ENCODE measurements at regions of chr7 and their contacts with region 1.

Region 1: GRCh38 chr7:74417419-74417971 is 36.2 kb upstream of the GTF2IRD1 start:
- DNase-seq: peak; percentile 69
- H3K4me3 Mint-ChIP-seq: no peak overlapping the region
- H3K27ac Mint-ChIP-seq: no peak overlapping the region
- H3K4me1 Mint-ChIP-seq: peaks cover 9% of the 10 kb centered on the region
- H3K27me3 Mint-ChIP-seq: no peaks in the 10 kb centered on the region
- CTCF ChIP-seq: peak; percentile 72

Region 2: GRCh38 chr7:74306730-74307469 is 110.6 kb before region 1 on chr7:
- CTCF ChIA-PET with region 1: no interaction called
- intact Hi-C with region 1: no loop called
- DNase-seq: no peak
- H3K4me3 Mint-ChIP-seq: no peak overlapping the region
- H3K27ac Mint-ChIP-seq: no peak overlapping the region
- H3K4me1 Mint-ChIP-seq: no peaks in the 10 kb centered on the region
- H3K27me3 Mint-ChIP-seq: no peaks in the 10 kb centered on the region
- CTCF ChIP-seq: no peak

Region 3: DNA sequence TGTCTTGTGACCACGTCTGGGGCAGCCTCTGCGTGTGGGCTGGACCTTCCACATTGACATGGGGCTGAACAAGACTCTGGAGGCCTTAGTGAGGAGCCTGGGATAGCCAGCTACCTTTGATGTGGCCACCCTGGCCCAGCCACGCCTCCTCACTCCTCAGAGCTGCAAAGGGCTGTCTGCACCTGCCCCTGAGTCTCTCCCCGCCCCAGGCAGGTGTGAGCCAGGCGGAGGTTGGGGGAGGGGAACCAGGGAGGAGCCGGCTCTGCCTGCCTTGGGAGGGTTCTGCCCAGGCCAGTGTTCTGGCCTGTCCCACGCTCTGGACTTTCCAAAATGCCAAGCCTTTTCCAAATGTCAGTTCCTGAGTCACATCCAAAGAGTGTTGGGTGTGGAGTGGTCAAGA is 108.4 kb after region 1 on chr7:
- CTCF ChIA-PET with region 1: no interaction called
- intact Hi-C with region 1: loop called (anchors 10 kb)
- DNase-seq: no peak
- H3K4me3 Mint-ChIP-seq: no peak overlapping the region
- H3K27ac Mint-ChIP-seq: no peak overlapping the region
- H3K4me1 Mint-ChIP-seq: no peaks in the 10 kb centered on the region
- H3K27me3 Mint-ChIP-seq: no peaks in the 10 kb centered on the region
- CTCF ChIP-seq: no peak

Region 4: GRCh38 chr7:74569501-74570075 is 152.1 kb after region 1 on chr7:
- CTCF ChIA-PET with region 1: interaction called, 4 read pairs
- intact Hi-C with region 1: loop called (anchors 10 kb)
- DNase-seq: no peak
- H3K4me3 Mint-ChIP-seq: no peak overlapping the region
- H3K27ac Mint-ChIP-seq: no peak overlapping the region
- H3K4me1 Mint-ChIP-seq: no peaks in the 10 kb centered on the region
- H3K27me3 Mint-ChIP-seq: no peaks in the 10 kb centered on the region
- CTCF ChIP-seq: no peak

Measured in Calu3 (cell line).